PC-9 (cell line): ENCODE measurements at regions of chr11 and their contacts with region 1.

Region 1: GRCh38 chr11:124763156-124763947 is 1.3 kb upstream of the ESAM start:
- DNase-seq: peak; percentile 90
- H3K4me3 ChIP-seq: peak overlapping the region; percentile 98
- H3K27ac ChIP-seq: peak overlapping the region; percentile 56
- H3K4me1 ChIP-seq: peaks cover 29% of the 10 kb centered on the region
- H3K27me3 ChIP-seq: no peaks in the 10 kb centered on the region
- CTCF ChIP-seq: peak; percentile 82

Region 2: GRCh38 chr11:124673333-124674167 is 89.8 kb before region 1 on chr11 and contains the starts of genes SIAE and SPA17:
- CTCF ChIA-PET with region 1: interaction called, 12 read pairs
- POLR2A ChIA-PET with region 1: interaction called, 9 read pairs
- intact Hi-C with region 1: loop called (anchors 1 kb)
- DNase-seq: peak; percentile 91 to 93
- H3K4me3 ChIP-seq: peak within 1 kb of the TSS; percentile 83
- H3K27ac ChIP-seq: peak within 1 kb of the TSS; percentile 50
- H3K4me1 ChIP-seq: peaks cover 18% of the 10 kb centered on the region
- H3K27me3 ChIP-seq: no peaks in the 10 kb centered on the region
- CTCF ChIP-seq: no peak
- total RNA-seq, gene SIAE: 29.2 and 37.9 TPM in 2 replicates
- total RNA-seq, gene SPA17: 6.1 and 15.7 TPM in 2 replicates

Region 3: GRCh38 chr11:124732230-124732629 is 31.1 kb before region 1 on chr11:
- CTCF ChIA-PET with region 1: interaction called, 17 read pairs
- POLR2A ChIA-PET with region 1: no interaction called
- intact Hi-C with region 1: no loop called
- DNase-seq: no peak
- H3K4me3 ChIP-seq: no peak overlapping the region
- H3K27ac ChIP-seq: no peak overlapping the region
- H3K4me1 ChIP-seq: no peaks in the 10 kb centered on the region
- H3K27me3 ChIP-seq: no peaks in the 10 kb centered on the region
- CTCF ChIP-seq: no peak

Region 4: DNA sequence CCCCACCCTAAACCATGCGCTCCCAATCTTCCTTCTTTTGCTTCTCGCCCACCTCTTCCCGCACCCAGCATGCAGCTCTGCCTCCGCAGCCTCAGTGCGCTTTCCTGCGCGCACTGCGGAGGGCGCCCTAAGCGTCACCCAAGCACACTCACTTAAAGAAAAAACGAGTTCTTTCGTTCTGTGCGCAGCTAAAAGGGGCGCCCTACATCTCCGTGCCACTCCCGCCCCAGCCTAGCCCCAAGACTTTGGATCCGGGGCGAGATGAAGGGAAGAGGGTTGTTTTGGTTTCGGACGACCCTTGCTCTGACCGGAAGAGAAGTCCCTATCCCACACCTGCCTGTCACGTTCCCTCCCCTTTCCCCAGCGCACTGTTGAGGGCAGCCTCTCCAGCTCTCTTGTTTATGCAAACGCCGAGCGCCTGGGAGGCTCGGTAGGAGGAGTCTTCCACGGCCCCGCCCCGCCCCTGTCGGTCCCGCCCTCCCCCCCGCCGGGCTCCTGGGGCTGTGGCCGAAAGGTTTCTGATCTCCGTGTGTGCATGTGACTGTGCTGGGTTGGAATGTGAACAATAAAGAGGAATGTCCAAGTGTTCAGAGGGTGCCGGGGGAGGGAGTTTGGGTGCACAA is 16.6 kb before region 1 on chr11:
- CTCF ChIA-PET with region 1: interaction called, 7 read pairs
- POLR2A ChIA-PET with region 1: interaction called, 16 read pairs
- intact Hi-C with region 1: loop called (anchors 1 kb)
- DNase-seq: peak; percentile 84 to 92
- H3K4me3 ChIP-seq: peak overlapping the region; percentile 67
- H3K27ac ChIP-seq: peak overlapping the region; percentile 90
- H3K4me1 ChIP-seq: peaks cover 45% of the 10 kb centered on the region
- H3K27me3 ChIP-seq: no peaks in the 10 kb centered on the region
- CTCF ChIP-seq: peak; percentile 75

Region 5: DNA sequence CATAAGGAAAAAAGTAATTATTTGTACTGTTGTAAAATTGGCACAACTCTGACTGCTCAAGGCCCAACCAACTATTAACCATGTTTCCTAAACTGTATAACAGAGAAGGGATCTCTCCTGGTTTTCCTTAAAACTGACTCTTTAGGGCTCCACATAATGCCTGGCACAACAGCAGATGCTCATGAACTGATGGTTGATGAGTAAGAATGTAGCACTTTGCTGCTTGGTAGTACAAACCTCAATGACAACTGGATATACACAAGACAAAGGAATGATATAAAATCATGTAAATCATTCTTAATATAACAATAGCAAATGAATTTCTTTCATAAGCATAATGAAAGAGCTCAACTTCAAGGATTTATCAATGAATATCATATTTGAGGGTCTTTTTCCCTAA is 25.2 kb after region 1 on chr11:
- CTCF ChIA-PET with region 1: interaction called, 16 read pairs
- POLR2A ChIA-PET with region 1: no interaction called
- intact Hi-C with region 1: loop called (anchors 1 kb)
- DNase-seq: no peak
- H3K4me3 ChIP-seq: no peak overlapping the region
- H3K27ac ChIP-seq: no peak overlapping the region
- H3K4me1 ChIP-seq: peaks cover 14% of the 10 kb centered on the region
- H3K27me3 ChIP-seq: no peaks in the 10 kb centered on the region
- CTCF ChIP-seq: no peak

Region 6: GRCh38 chr11:124793466-124794278 is 30.3 kb after region 1 on chr11:
- CTCF ChIA-PET with region 1: interaction called, 15 read pairs
- POLR2A ChIA-PET with region 1: no interaction called
- intact Hi-C with region 1: loop called (anchors 1 kb)
- DNase-seq: peak; percentile 31 to 67
- H3K4me3 ChIP-seq: no peak overlapping the region
- H3K27ac ChIP-seq: no peak overlapping the region
- H3K4me1 ChIP-seq: peaks cover 33% of the 10 kb centered on the region
- H3K27me3 ChIP-seq: no peaks in the 10 kb centered on the region
- CTCF ChIP-seq: peak; percentile 81

Region 7: GRCh38 chr11:124800226-124800929 is 37.0 kb after region 1 on chr11 and contains the start of gene MSANTD2:
- CTCF ChIA-PET with region 1: interaction called, 15 read pairs
- POLR2A ChIA-PET with region 1: no interaction called
- intact Hi-C with region 1: loop called (anchors 1 kb)
- DNase-seq: peak; percentile 53 to 71
- H3K4me3 ChIP-seq: peak within 1 kb of the TSS; percentile 97
- H3K27ac ChIP-seq: peak within 1 kb of the TSS; percentile 56
- H3K4me1 ChIP-seq: peaks cover 29% of the 10 kb centered on the region
- H3K27me3 ChIP-seq: no peaks in the 10 kb centered on the region
- CTCF ChIP-seq: no peak
- total RNA-seq, gene MSANTD2: 16.9 and 18.1 TPM in 2 replicates